ENCODE measurements at regions of chr2 and their contacts with region 1.

Region 1: DNA sequence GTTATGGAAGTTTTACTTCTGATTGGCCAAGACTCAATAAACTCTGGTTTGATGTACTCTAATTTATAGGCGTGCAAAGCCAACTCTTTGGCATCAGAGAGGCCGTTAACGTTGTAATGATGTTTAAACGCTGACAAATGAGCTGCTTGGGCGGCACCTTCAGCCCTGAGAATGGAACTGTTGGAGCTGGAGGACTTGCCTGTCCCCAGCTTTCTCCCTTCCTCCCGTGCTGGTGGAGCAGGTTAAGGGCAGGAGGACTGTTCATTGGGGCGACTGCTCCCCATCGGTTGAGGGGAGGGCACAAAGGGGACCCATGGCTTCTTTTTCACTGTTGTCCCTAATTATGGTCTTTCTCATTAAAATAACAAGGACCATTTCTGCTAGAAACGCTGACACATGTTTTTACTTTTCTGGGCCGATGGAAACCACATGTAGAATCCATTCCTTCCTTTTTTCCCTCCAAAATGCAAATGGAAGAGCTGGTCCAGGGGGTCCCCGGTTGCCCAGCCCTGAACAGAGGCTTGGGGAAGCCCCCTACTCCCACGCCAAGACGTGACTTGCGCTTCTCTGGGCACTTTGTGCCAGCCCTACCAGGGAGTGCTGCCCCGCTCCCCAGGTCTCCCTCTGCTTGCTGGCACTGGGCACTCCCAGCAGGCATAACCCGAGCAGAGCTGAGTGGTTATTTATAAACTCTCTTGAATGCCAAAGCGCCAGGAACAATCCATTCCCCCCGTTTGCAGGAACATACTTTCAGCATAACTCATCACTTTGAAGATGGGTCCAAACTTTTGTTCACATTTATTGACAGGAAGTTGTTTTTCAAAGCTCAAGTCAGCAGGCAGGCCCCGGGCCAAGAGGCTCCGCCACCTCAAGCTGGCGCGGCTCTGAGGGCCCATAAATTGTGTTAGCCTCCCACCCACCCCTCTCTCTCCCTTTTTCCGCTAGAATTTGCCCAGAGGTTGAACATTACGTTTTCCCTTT is 170.1 kb downstream of the ASB1 start:
- DNase-seq: peak; percentile 93
- H3K4me3 ChIP-seq: no peak overlapping the region
- H3K27ac ChIP-seq: peak overlapping the region; percentile 29
- H3K4me1 ChIP-seq: peaks cover 10% of the 10 kb centered on the region
- H3K27me3 ChIP-seq: no peaks in the 10 kb centered on the region
- CTCF ChIP-seq: no peak
- POLR2A ChIP-seq: no peak

Region 2: DNA sequence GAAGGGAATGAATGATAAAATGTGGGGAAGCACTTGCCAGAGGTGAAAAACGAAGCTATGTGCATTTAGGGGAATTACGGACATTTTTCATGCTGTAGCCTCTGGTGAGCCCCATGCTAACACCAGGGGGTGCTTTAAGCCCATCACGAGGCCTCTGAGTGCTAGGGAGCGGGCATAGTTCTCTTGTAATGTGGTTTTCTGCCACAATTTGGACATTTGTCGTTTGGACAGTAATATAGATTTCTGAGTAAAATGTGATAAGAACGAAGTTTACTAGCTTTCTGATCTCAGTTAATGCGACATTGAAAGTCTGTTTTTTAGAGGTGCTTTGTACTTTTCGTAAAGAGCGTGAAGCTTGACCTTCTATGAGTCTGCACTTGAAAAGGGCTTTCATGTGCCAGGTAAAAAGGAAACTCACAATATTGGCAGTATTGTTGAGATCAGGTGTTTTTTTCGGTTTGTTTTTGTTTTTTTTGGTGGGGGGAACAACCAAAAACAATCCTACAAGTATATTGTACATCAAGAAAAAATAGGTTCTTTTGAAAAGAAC is 226.0 kb before region 1 on chr2:
- CTCF ChIA-PET with region 1: no interaction called
- POLR2A ChIA-PET with region 1: no interaction called
- dilution Hi-C with region 1: no loop called
- intact Hi-C with region 1: loop called (anchors 10 kb)
- DNase-seq: peak; percentile 55
- H3K4me3 ChIP-seq: no peak overlapping the region
- H3K27ac ChIP-seq: no peak overlapping the region
- H3K4me1 ChIP-seq: no peaks in the 10 kb centered on the region
- H3K27me3 ChIP-seq: no peaks in the 10 kb centered on the region
- CTCF ChIP-seq: peak; percentile 77 to 78
- POLR2A ChIP-seq: no peak

Region 3: GRCh38 chr2:238426568-238427434 is 170.1 kb before region 1 on chr2 and contains the start of gene ASB1:
- CTCF ChIA-PET with region 1: no interaction called
- POLR2A ChIA-PET with region 1: no interaction called
- dilution Hi-C with region 1: no loop called
- intact Hi-C with region 1: no loop called
- DNase-seq: peak; percentile 66
- H3K4me3 ChIP-seq: peak within 1 kb of the TSS; percentile 26 to 46 (median 45)
- H3K27ac ChIP-seq: peak within 1 kb of the TSS; percentile 87
- H3K4me1 ChIP-seq: peaks cover 13% of the 10 kb centered on the region
- H3K27me3 ChIP-seq: no peaks in the 10 kb centered on the region
- CTCF ChIP-seq: no peak
- POLR2A ChIP-seq: peak; percentile 69
- total RNA-seq, gene ASB1: 16.2 and 16.7 TPM in 2 replicates

Region 4: DNA sequence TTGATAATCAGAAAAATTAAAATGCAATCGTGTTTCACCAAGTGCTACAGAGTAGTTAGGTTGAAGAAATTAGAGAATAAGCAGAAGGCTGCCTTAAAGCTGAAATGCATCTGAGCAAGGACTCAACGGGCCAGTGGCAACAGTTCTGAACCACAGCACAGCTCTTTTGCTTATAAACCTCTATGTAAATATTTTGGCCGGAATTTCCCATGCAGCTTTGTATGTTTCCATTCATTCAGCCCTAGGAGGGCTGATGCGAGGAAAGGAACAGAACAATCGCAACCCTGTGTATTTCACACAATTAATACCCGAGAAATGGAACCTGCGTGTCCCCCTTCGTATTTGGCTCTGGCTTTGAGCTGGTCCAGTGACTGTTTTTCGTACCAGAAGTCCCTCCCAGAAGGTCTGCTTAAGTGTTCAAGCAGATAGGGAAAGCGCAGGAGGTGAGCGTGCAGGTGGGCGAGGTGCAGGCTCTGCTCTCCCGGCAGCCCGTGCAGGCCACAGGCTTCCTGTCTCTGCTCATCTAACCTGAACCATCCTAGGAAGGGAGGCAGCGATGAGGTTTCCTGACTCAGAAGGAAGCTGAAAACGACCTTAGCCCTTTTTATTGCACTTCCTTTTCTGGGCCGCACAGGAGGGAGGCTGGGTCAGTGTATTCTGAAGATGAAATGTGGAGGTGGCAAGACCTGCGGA is 102.8 kb before region 1 on chr2:
- CTCF ChIA-PET with region 1: no interaction called
- POLR2A ChIA-PET with region 1: no interaction called
- dilution Hi-C with region 1: no loop called
- intact Hi-C with region 1: no loop called
- DNase-seq: no peak
- H3K4me3 ChIP-seq: no peak overlapping the region
- H3K27ac ChIP-seq: no peak overlapping the region
- H3K4me1 ChIP-seq: no peaks in the 10 kb centered on the region
- H3K27me3 ChIP-seq: no peaks in the 10 kb centered on the region
- CTCF ChIP-seq: no peak
- POLR2A ChIP-seq: no peak

Region 5: DNA sequence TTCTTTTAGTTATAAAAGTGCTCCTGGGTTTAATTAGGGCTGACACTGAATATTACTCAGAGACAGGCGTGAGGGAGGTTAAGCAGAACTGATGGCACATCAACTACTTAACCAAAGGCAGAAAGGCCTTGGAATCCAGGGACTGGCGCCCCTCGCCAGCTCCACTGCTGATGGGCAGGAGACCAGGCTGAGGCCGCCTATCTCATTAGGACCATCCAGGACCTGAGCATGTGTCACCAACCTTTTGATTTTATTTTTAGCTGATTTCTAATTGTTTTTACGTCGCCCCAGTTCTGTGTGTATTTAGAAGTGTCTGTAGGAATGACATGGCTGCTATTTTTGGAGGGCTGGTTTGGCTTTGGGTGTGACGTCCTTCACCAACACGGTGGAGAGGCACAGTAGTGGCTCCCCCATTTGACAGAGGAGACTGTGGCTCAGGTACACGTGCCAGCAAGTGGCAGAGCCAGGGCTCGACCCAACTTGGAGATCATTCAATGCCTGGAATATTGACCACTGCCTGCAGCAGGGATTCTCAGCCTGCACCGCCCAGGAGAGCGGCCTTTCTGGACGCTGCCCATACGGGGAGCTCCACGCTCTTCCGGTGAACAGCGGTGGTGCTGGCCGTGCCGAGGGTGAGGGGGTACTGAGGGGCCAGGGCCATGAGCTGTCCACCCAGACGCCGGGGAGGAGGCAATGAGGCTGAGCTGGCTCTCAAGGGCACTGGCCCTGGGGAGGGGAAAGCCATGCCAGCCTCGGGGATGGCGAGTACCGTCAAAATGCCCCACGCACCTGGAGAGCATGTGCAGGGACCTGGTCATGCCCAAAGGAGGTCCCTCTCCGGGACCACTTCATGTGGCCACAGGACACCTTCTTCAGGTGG is 35.6 kb after region 1 on chr2:
- CTCF ChIA-PET with region 1: no interaction called
- POLR2A ChIA-PET with region 1: no interaction called
- dilution Hi-C with region 1: no loop called
- intact Hi-C with region 1: no loop called
- DNase-seq: no peak
- H3K4me3 ChIP-seq: no peak overlapping the region
- H3K27ac ChIP-seq: no peak overlapping the region
- H3K4me1 ChIP-seq: no peaks in the 10 kb centered on the region
- H3K27me3 ChIP-seq: no peaks in the 10 kb centered on the region
- CTCF ChIP-seq: no peak
- POLR2A ChIP-seq: no peak

Region 6: GRCh38 chr2:238644095-238645081 is 47.5 kb after region 1 on chr2:
- CTCF ChIA-PET with region 1: interaction called, 4 read pairs
- POLR2A ChIA-PET with region 1: no interaction called
- dilution Hi-C with region 1: no loop called
- intact Hi-C with region 1: loop called (anchors 1 kb)
- DNase-seq: peak; percentile 61
- H3K4me3 ChIP-seq: no peak overlapping the region
- H3K27ac ChIP-seq: peak overlapping the region; percentile 60
- H3K4me1 ChIP-seq: peaks cover 18% of the 10 kb centered on the region
- H3K27me3 ChIP-seq: no peaks in the 10 kb centered on the region
- CTCF ChIP-seq: no peak
- POLR2A ChIP-seq: no peak

Region 7: DNA sequence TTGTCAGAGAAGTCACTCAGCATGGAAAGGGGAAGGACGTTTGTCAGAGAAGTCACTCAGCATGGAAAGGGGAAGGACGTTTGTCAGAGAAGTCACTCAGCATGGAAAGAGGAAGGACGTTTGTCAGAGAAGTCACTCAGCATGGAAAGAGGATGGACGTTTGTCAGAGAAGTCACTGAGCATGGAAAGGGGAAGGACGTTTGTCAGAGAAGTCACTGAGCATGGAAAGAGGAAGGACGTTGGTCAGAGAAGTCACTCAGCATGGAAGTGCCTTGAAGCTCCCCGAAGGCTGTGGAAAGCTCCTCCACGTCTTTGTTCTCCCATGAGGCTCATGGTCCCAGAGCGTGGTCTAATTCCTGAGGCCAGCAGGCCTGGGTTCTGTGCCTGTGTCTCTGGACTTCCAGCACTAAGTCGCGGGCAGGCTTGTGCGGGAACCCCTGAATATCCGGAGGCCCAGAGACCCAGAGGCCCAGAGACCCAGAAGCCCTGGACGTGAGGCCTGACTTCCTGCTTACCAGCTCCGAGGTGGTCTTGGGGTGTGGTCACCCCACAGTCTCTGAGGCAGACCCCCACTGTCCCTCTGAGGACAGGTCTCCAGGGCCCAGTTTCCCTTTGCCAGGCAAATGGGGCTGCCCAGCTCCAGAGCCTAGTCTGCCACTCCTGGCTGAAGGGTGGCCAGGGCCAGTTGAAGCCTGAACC is 180.7 kb after region 1 on chr2:
- CTCF ChIA-PET with region 1: no interaction called
- POLR2A ChIA-PET with region 1: no interaction called
- dilution Hi-C with region 1: no loop called
- intact Hi-C with region 1: no loop called
- DNase-seq: no peak
- H3K4me3 ChIP-seq: no peak overlapping the region
- H3K27ac ChIP-seq: no peak overlapping the region
- H3K4me1 ChIP-seq: no peaks in the 10 kb centered on the region
- H3K27me3 ChIP-seq: no peaks in the 10 kb centered on the region
- CTCF ChIP-seq: no peak
- POLR2A ChIP-seq: no peak

Measured in endothelial cell of umbilical vein (primary cell).